ENCODE measurements at regions of chr16 and their contacts with region 1.

Region 1: GRCh38 chr16:1492923-1493745 is at the start of gene TELO2:
- DNase-seq: peak; percentile 90
- H3K4me3 Mint-ChIP-seq: peak within 1 kb of the TSS; percentile 87
- H3K27ac Mint-ChIP-seq: peak within 1 kb of the TSS; percentile 93
- H3K4me1 Mint-ChIP-seq: peaks cover 15% of the 10 kb centered on the region
- H3K27me3 Mint-ChIP-seq: no peaks in the 10 kb centered on the region
- total RNA-seq, gene TELO2: 62.6 to 63.2 TPM

Region 2: DNA sequence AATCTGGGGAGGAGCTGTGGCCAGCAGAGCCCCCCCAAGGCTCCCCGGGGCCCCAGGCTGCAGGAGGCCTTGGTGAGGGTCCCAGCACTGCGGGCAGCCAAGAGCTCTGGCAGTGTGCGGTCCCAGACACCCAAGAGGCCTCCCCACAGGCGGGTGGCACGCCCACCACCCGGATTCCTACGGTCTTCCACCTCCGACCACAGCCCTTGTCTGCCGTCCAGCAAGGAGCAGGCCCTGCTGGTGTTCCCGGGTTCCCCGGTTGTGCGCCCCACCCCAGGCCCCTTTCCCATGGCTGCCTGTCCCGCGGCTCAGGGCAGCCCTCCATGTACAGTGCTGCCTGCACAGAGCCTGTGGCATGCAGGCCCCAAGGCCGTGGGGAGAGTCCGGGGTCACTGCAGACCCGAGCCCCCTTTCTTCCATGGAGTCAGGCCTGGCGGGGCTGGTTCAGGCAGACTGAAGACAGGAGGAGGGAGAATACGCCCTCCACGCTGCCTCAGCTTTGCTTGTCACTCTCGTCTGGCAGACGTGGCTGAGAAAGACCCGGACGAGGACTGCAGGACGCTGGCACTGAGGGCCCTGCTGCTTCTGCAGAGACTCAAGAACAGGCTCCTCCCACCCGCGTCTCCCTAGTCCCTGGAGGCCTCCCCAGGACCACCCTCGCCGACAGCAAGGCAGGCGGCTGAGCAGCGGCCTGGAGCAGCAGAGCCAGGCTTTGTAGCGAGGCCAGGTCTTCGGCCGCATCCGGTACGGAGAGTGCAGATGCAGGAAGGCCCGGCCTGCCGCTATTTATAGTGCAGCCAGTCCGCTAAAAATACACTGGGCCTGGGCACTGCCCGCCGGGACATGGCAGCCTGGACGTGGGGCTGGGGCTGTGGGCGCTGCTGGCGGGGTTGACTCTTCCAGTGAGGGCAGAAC is 16.4 kb after region 1 on chr16:
- CTCF ChIA-PET with region 1: no interaction called
- POLR2A ChIA-PET with region 1: no interaction called
- intact Hi-C with region 1: loop called (anchors 2 kb)
- DNase-seq: no peak
- H3K4me3 Mint-ChIP-seq: no peak overlapping the region
- H3K27ac Mint-ChIP-seq: no peak overlapping the region
- H3K4me1 Mint-ChIP-seq: no peaks in the 10 kb centered on the region
- H3K27me3 Mint-ChIP-seq: no peaks in the 10 kb centered on the region

Region 3: GRCh38 chr16:1533443-1533951 is 40.4 kb after region 1 on chr16 and contains the start of gene TMEM204:
- CTCF ChIA-PET with region 1: interaction called, 3 read pairs
- POLR2A ChIA-PET with region 1: interaction called, 3 read pairs
- intact Hi-C with region 1: loop called (anchors 5 kb)
- DNase-seq: peak; percentile 66
- H3K4me3 Mint-ChIP-seq: peak within 1 kb of the TSS; percentile 99
- H3K27ac Mint-ChIP-seq: peak within 1 kb of the TSS; percentile 97
- H3K4me1 Mint-ChIP-seq: peaks cover 35% of the 10 kb centered on the region
- H3K27me3 Mint-ChIP-seq: no peaks in the 10 kb centered on the region
- total RNA-seq, gene TMEM204: 14.8 to 15.5 TPM

Measured in activated CD4-positive, alpha-beta memory T cell treated with anti-CD3 and anti-CD28 coated beads for 36 hours (primary cell).